Head of caudate nucleus (tissue), 42 donors: ENCODE measurements at regions of chr19 and their contacts with region 1.

Region 1: DNA sequence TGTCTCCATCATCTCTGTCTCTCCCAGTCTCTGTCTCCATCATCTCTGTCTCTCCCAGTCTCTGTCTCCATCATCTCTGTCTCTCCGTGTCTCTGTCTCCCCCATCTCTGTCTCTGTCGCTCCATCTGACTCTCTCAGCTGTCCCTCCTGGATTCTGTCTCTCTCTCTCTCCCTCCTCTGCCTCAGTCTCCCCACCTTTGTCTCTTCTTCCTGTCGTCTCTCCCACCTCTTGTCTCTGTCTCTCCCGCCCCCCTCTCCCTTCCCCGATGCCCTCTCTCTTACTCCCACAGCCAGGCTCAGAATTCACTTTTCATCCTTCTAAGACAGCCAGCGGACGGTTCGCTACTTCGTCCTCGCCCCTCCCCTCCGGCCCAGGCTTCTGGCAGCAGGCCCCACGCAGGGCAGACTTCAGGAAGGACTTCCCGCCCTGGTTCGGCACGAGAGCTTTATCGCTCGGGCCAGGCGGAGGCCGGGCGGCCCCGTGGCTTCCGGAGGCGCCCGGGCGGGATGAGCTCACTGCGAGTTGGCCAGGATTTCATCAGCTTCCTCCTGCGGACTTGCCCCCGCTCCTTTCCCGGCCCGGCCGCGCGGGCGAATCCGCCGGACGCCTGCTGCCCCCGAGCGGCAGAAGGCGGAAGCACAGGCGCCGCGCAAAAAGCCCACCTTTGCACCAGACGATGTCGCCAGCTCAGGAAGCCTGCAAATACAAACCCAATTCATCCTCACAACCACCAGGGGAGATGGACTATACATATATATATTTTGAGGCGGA is 12.4 kb upstream of the CCDC9 start:
- DNase-seq: peak; percentile 53 to 93 (median 84)

Region 2: GRCh38 chr19:47145639-47146486 is 98.1 kb before region 1 on chr19:
- intact Hi-C with region 1: loop called (anchors 5 kb)
- DNase-seq: no peak

Region 3: DNA sequence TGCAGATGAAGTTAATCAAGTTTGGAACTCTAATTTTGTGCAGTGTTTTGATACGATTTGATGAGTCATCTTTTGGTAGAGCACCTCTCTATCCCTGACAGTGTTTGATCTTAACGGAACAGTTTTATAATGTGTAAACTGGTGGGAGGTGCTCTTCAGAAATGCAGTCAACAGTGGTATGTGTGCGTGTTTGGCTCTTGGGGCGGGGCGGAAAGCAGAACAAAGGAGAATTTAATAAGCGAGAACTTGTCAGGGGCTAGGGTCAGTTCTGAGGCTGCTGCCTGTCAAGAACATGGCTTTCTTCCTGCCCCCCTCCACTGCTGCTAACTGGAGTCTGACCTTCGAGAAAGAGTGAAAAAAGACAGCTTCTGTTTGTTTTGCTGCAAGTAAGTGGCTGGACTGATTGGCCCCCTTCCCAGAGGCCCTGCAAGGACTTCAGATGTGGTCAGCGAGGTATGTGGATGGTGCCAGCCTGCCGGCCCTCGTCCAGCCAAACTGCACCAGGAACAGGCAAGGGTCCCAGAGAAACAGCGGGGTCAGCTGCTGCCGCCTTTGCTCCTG is 53.7 kb before region 1 on chr19:
- intact Hi-C with region 1: no loop called
- DNase-seq: peak in 41 of 42 donors; percentile 14 to 80 (median 49)

Region 4: GRCh38 chr19:47209319-47210179 is 34.4 kb before region 1 on chr19:
- intact Hi-C with region 1: loop called (anchors 5 kb)
- DNase-seq: no peak

Region 5: DNA sequence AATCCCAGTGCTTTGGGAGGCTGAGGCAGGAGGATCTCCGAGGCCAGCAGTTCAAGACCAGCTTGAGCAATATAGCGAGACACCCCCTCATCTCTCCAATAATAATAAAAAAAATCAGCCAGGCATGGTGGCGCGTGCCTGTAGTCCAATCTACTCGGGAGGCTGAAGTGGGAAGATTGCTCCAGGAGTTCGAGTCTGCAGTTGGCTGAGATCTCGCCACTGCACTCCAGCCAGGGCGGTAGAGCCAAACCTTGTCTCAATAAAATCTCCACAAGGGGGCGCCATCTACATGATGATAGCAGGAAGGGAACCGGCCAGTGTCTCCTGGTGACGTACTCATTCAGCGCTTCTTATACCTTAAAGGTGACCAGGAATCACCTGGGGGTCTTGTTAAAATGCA is 52.1 kb after region 1 on chr19:
- intact Hi-C with region 1: no loop called
- DNase-seq: peak; percentile 28 to 92 (median 72)